AG04449 (cell line): ENCODE measurements at regions of chr6 and their contacts with region 1.

Region 1: DNA sequence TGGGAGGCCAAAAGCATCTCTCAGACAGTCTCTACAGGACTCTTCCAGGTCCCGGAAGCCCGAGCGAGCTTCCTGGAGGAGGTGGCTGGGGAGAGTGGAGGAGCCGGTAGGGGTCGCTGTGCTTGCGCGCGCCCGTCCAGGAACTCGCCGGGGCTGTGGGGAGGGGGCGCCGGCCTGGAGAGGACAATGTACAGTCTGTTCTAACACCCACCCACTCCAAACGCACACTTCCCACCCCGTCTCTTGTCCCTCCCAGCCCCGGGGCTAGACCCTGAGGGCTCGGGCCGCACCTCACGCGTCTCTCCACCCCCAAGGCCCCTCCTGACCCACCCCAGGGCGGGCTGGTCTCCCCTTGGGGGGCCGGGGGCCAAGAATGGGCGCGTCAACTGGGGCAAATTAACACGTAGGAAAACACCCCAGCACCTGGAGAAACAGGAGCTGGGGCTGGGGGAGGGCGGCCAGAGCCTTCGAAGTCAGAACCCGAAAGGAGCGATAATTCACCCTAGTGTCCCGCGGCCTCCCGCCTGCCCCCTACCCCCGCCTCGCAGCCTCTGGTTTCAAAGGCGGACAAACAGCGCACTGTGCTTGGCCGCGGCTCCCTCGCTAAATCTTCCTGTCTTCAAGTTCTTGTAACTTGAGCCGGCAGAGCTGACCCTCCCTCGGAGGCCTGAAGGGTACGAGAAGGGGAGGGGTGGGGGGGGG is 103.2 kb upstream of the FOXP4 start:
- DNase-seq: no peak
- H3K4me3 ChIP-seq: no peak overlapping the region
- CTCF ChIP-seq: peak; percentile 64

Region 2: DNA sequence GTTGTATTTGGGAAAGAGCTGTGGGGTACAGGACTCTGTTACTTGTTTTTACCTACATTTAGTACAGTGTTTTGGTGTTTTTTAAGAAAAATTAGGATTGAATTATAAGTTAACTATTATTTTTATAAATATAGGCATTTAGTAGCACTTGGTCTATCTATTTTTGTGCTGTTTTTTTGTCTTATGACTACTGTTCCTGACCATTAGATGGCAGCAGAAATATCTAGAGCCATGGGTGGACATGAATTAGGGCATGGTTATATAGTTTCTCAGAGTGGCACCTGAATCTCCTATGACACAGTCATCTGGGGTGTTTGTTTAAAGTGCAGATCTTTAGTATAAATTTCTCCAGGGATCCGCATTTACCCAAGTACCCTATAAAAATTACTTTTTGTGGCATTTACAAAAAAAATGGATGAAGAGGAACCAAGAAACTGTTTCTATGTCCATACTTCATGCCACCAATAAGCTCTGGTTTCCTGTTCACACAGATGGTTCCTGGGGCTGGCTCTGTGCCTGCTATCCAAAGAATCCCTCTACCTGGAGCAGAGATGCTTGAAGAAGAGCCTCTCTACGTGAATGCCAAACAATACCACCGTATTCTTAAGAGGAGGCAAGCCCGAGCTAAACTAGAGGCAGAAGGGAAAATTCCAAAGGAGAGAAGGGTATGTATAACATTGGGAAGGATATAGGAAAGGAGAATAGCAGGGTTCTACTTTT is 350.4 kb before region 1 on chr6:
- CTCF ChIA-PET with region 1: no interaction called
- POLR2A ChIA-PET with region 1: no interaction called
- DNase-seq: no peak
- H3K4me3 ChIP-seq: no peak overlapping the region
- CTCF ChIP-seq: peak; percentile 43

Region 3: GRCh38 chr6:41430875-41431274 is 12.1 kb before region 1 on chr6:
- CTCF ChIA-PET with region 1: interaction called, 37 read pairs
- POLR2A ChIA-PET with region 1: no interaction called
- DNase-seq: peak; percentile 33
- H3K4me3 ChIP-seq: no peak overlapping the region
- CTCF ChIP-seq: no peak

Region 4: GRCh38 chr6:41463062-41463930 is 20.3 kb after region 1 on chr6:
- CTCF ChIA-PET with region 1: interaction called, 122 read pairs
- POLR2A ChIA-PET with region 1: no interaction called
- DNase-seq: no peak
- H3K4me3 ChIP-seq: no peak overlapping the region
- CTCF ChIP-seq: peak; percentile 59

Region 5: GRCh38 chr6:41477572-41477971 is 34.6 kb after region 1 on chr6:
- CTCF ChIA-PET with region 1: no interaction called
- POLR2A ChIA-PET with region 1: no interaction called
- DNase-seq: no peak
- H3K4me3 ChIP-seq: no peak overlapping the region
- CTCF ChIP-seq: no peak